ENCODE measurements at regions of chr3 and their contacts with region 1.

Region 1: GRCh38 chr3:128095222-128095703 is 28.3 kb downstream of the RUVBL1 start:
- DNase-seq: peak; percentile 34
- H3K4me3 ChIP-seq: no peak overlapping the region
- H3K27me3 ChIP-seq: no peaks in the 10 kb centered on the region
- CTCF ChIP-seq: peak; percentile 88

Region 2: DNA sequence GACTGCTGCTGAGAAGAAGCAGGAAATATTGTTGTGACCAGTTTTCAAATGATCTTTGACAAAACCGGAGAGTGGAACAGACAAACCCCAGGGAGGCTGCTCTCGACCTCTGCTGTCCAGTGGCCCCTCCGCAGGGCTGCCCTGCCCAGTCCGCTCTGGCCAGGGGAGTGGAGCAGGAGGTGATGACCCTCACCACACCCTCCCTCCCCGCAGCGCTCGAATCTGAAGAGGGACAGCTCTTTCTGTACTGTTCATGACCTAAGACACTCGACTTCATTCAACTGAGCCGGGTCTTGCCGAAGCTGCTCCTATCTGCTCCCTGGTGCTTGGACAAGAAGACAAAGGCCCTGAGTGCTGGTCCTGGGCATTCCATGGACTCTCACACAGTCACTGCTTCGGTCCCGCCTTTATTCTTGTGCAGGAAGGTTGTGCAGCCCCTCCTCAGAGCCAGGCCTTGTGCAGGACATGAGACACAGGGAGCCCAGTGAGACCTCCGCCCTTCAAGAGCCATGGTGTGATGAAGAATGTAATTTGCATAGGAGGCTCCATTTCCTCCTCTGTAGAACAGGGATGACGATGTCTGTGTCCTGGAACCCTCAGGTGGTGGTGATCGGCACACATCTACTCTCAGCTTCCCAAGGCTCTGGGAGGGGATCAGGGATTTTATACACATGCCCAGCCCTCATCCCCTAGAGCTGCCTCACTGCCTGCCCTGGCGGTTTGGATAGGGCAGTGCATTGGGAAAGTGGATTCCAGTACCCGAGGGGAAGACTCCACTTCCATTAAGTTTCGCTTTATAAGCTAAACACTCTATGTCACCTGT is 710.3 kb before region 1 on chr3:
- CTCF ChIA-PET with region 1: no interaction called
- POLR2A ChIA-PET with region 1: no interaction called
- DNase-seq: no peak
- H3K4me3 ChIP-seq: no peak overlapping the region
- H3K27me3 ChIP-seq: peaks cover 9% of the 10 kb centered on the region
- CTCF ChIP-seq: no peak

Region 3: GRCh38 chr3:128041344-128041743 is 53.9 kb before region 1 on chr3:
- CTCF ChIA-PET with region 1: no interaction called
- POLR2A ChIA-PET with region 1: no interaction called
- DNase-seq: no peak
- H3K4me3 ChIP-seq: no peak overlapping the region
- H3K27me3 ChIP-seq: peaks cover 17% of the 10 kb centered on the region
- CTCF ChIP-seq: no peak

Region 4: GRCh38 chr3:128060473-128061381 is 34.5 kb before region 1 on chr3:
- CTCF ChIA-PET with region 1: no interaction called
- POLR2A ChIA-PET with region 1: no interaction called
- DNase-seq: peak; percentile 96
- H3K4me3 ChIP-seq: no peak overlapping the region
- H3K27me3 ChIP-seq: no peaks in the 10 kb centered on the region
- CTCF ChIP-seq: peak; percentile 42

Region 5: GRCh38 chr3:128112357-128112968 is 17.2 kb after region 1 on chr3:
- CTCF ChIA-PET with region 1: interaction called, 17 read pairs
- POLR2A ChIA-PET with region 1: no interaction called
- DNase-seq: peak; percentile 60
- H3K4me3 ChIP-seq: no peak overlapping the region
- H3K27me3 ChIP-seq: no peaks in the 10 kb centered on the region
- CTCF ChIP-seq: 0 out of 2 replicates have a peak, but pooled peaks have one; percentile 12

Region 6: GRCh38 chr3:128133273-128134084 is 38.2 kb after region 1 on chr3:
- CTCF ChIA-PET with region 1: interaction called, 40 read pairs
- POLR2A ChIA-PET with region 1: no interaction called
- DNase-seq: no peak
- H3K4me3 ChIP-seq: no peak overlapping the region
- H3K27me3 ChIP-seq: no peaks in the 10 kb centered on the region
- CTCF ChIP-seq: peak; percentile 70

Region 7: DNA sequence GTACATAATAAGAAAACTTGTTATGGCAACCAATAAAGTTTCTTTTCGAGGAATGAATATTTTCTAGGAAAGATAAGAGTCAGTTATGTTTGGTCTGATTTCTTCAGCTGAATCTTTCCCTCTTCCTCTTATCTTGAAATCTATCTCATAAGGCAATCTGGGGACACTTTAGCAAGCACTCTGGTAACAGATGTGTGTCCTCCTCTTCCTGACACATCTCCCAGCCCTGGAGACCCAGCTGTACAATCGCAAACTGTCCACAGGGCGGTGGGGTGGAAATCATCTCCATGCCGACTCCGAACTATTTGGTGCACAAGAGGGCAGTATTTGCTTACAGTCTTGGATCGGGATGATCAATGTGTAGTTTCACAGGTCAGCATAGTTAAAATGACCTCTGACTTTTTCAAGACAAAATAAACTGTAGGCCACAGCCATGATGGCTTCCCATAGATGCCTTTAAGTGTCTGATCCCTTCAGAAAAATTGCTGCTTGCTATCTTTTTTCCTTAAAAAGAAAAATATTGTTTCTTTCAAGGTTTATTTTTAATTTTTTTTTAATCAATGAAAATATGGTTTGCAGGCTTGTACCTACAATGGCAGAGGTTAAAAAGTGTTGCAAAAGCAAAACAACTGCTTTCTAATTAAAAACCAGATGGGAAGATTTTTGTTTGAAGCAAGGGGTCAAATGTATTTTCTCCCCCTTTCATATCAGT is 75.7 kb after region 1 on chr3:
- CTCF ChIA-PET with region 1: interaction called, 14 read pairs
- POLR2A ChIA-PET with region 1: no interaction called
- DNase-seq: peak; percentile 39
- H3K4me3 ChIP-seq: no peak overlapping the region
- H3K27me3 ChIP-seq: no peaks in the 10 kb centered on the region
- CTCF ChIP-seq: peak; percentile 91

Region 8: GRCh38 chr3:128194843-128195242 is 99.6 kb after region 1 on chr3:
- CTCF ChIA-PET with region 1: no interaction called
- POLR2A ChIA-PET with region 1: no interaction called
- DNase-seq: no peak
- H3K4me3 ChIP-seq: no peak overlapping the region
- H3K27me3 ChIP-seq: no peaks in the 10 kb centered on the region
- CTCF ChIP-seq: no peak

Region 9: DNA sequence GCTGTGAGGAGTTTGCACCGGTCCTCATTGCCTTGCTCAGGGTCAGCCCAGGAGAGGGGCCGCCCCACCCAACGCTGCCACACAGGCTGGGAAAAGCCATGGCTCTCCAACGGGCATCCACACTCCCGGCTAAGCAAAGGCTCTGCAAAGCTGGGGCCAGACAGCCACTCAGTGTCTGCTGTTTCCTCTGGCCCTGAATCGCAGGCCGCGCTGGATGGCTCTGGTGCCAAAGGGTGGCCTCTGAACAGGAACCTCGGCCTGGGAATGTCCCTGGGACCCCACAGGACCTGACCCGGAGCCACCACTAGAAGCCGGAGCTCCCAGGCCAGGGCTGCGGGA is 512.4 kb after region 1 on chr3:
- CTCF ChIA-PET with region 1: interaction called, 46 read pairs
- POLR2A ChIA-PET with region 1: no interaction called
- DNase-seq: no peak
- H3K4me3 ChIP-seq: peak overlapping the region; percentile 50; the same call in 1 of the 2 replicates
- H3K27me3 ChIP-seq: no peaks in the 10 kb centered on the region
- CTCF ChIP-seq: no peak

Measured in BJ (cell line).